ENCODE measurements at regions of chr19 and their contacts with region 1.

Region 1: DNA sequence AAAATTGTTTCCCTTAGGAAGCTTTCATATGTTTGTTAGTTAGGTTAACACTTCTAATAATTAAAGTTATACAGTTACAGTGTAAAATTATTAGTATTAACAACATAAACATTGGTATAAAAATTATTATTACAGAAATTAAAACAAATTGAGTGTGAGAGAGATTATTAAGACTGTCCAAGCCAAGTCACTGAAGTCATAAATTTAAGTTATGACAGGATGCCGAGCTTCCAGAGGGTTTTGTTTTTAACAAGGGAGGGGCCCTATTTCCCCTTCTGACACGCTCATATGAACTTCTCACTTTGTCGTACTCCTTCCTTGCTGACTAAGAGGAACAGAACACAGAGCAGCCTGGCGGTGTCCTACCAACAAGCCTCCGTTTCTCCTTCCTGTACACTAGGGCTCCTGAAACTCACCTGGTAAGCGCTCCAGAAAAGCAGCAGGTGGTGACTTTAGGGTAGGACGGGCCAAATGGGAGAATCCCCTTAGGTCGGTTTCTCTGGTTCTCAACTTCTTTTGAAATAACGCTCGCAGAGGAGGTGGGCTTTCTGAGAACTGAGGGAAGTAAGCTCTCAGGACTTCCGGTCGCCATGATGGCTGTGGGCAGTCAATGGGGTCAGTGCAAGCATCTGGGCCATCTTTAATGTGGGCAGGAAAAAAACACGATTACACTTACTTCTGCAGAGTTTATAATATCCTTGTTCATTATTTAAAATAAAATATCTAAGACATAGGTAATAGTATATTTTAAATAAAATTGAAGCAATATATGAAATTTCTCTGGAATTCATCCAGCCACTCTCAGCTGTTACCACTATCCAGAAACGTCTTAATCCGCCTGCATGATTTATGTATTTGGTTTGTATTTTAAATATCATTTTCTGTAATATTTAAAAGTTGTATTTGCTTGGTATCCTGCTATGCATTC is at the start of gene CARD8:
- DNase-seq: peak; percentile 77
- H3K4me3 Mint-ChIP-seq: peak within 1 kb of the TSS; percentile 89
- H3K27ac Mint-ChIP-seq: peak within 1 kb of the TSS; percentile 91
- H3K4me1 Mint-ChIP-seq: peaks cover 23% of the 10 kb centered on the region
- H3K27me3 Mint-ChIP-seq: no peaks in the 10 kb centered on the region
- CTCF ChIP-seq: no peak
- total RNA-seq, gene CARD8: 32.3 and 34.0 TPM in 2 replicates

Region 2: GRCh38 chr19:48203732-48204628 is 51.7 kb before region 1 on chr19:
- CTCF ChIA-PET with region 1: interaction called, 4 read pairs
- intact Hi-C with region 1: loop called (anchors 5 kb)
- DNase-seq: peak; percentile 97
- H3K4me3 Mint-ChIP-seq: no peak overlapping the region
- H3K27ac Mint-ChIP-seq: no peak overlapping the region
- H3K4me1 Mint-ChIP-seq: no peaks in the 10 kb centered on the region
- H3K27me3 Mint-ChIP-seq: no peaks in the 10 kb centered on the region
- CTCF ChIP-seq: no peak